ENCODE measurements at regions of chr2 and their contacts with region 1.

Region 1: GRCh38 chr2:55617175-55618024 is at the start of gene PPP4R3B:
- DNase-seq: peak; percentile 99 to 100 (median 100)
- H3K4me3 ChIP-seq: peak within 1 kb of the TSS; percentile 97 to 98
- H3K4me3 Mint-ChIP-seq: no peak within 1 kb of the TSS
- H3K27ac ChIP-seq: peak within 1 kb of the TSS; percentile 100
- H3K27ac Mint-ChIP-seq: no peak within 1 kb of the TSS
- H3K4me1 ChIP-seq: peaks cover 64% of the 10 kb centered on the region
- H3K4me1 Mint-ChIP-seq: peaks cover 23 to 44% (median 40%) of the 10 kb centered on the region in 4 donors
- H3K27me3 ChIP-seq: no peaks in the 10 kb centered on the region
- H3K27me3 Mint-ChIP-seq: no peaks in the 10 kb centered on the region
- total RNA-seq, gene PPP4R3B: 111 to 114 TPM

Region 2: GRCh38 chr2:54570925-54571694 is 1046.3 kb before region 1 on chr2:
- CTCF ChIA-PET with region 1: no interaction called
- POLR2A ChIA-PET with region 1: no interaction called
- intact Hi-C with region 1: loop called (anchors 2 kb)
- DNase-seq: peak; percentile 63 to 87 (median 72)
- H3K4me3 ChIP-seq: peak overlapping the region in 1 of 2 donors; percentile 11
- H3K4me3 Mint-ChIP-seq: peak overlapping the region; percentile 43 to 95 (median 80)
- H3K27ac ChIP-seq: peak overlapping the region; percentile 94
- H3K27ac Mint-ChIP-seq: peak overlapping the region; percentile 93 to 99 (median 99)
- H3K4me1 ChIP-seq: peaks cover 96% of the 10 kb centered on the region
- H3K4me1 Mint-ChIP-seq: peaks cover 64 to 99% (median 84%) of the 10 kb centered on the region in 4 donors
- H3K27me3 ChIP-seq: no peaks in the 10 kb centered on the region
- H3K27me3 Mint-ChIP-seq: no peaks in the 10 kb centered on the region

Region 3: DNA sequence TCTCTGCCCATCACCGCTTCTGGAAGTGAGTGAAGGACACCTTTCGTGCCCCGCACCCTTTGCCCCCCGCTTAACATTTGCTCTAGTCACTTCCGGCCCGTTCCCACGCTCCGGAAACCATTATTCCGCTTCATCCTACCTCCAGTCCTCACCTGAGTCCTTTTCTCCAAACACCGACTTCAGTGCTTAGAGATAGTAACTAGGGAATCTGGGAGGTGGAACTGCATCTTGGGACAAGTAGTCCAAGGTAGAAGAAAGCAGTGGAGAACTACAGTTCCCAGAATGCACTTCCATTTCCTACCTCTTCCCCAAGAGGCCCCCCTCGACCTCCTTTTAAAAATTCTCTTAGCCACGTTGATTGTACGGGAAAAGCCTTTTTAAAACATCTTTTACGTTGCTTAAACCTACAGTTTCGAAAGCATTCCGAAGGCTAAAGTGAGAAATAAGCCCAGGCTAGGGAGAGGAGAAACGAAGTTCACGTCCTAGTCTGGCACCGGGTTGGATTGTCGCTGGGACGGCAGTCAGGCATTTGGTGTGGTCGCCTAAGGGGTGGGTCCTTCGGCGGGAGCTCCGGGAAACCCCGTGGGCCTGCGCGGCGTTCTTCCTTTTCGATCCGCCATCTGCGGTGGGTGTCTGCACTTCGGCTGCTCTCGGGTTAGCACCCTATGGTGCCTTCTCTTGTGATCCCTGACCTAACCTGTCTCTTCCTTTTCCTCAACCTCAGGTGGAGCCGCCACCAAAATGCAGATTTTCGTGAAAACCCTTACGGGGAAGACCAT is 385.1 kb before region 1 on chr2 and contains the starts of genes CLHC1 and RPS27A:
- CTCF ChIA-PET with region 1: no interaction called
- POLR2A ChIA-PET with region 1: interaction called, 13 read pairs
- intact Hi-C with region 1: loop called (anchors 1 kb)
- DNase-seq: peak; percentile 92 to 96 (median 94)
- H3K4me3 ChIP-seq: peak within 1 kb of the TSS; percentile 82 to 98
- H3K4me3 Mint-ChIP-seq: peak within 1 kb of the TSS; percentile 92 to 100 (median 100)
- H3K27ac ChIP-seq: peak within 1 kb of the TSS; percentile 97
- H3K27ac Mint-ChIP-seq: peak within 1 kb of the TSS; percentile 94 to 100 (median 98)
- H3K4me1 ChIP-seq: peaks cover 52% of the 10 kb centered on the region
- H3K4me1 Mint-ChIP-seq: peaks cover 46 to 75% (median 62%) of the 10 kb centered on the region in 4 donors
- H3K27me3 ChIP-seq: no peaks in the 10 kb centered on the region
- H3K27me3 Mint-ChIP-seq: no peaks in the 10 kb centered on the region
- total RNA-seq, gene CLHC1: 12.4 to 14.2 TPM
- total RNA-seq, gene RPS27A: 2,280 to 2,392 TPM

Region 4: DNA sequence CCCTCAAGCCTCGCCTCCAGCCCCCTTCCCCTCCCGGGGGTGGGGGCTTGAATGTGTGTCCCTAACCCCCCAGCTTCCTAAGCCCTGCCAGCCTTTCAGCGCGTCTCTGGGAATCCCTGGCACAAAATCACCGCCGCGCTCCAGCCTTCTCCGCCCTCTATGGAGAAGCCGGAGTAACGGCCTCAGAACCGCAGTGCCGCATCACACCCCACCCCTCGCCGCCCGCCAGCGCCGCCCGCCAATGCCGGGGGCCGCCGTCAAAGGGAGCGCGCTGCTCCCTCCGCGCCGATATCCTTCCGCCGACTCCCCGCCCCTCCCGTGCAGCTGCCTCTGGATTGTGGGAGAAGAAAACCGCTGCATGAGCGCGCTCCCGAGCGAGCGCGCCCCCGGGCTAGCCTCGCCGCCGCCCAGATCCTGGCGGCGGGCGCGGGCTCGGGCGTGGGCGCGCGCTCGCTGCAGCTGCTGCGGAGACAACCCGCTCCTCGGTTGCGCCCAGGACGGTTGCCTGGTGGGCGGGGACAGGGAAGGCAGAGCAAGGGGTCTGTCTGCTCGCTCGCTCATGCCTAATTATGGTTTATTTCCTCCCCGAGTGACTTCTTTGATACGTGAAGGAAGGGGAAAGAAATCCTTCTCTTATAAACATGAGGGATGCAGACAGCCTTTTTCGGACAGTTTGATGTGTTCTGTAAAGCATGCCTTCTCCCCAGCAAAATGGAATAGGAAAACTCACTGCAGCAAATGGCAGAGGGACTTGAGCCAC is 197.5 kb before region 1 on chr2 and contains the start of gene CCDC88A:
- CTCF ChIA-PET with region 1: interaction called, 3 read pairs
- POLR2A ChIA-PET with region 1: interaction called, 9 read pairs
- intact Hi-C with region 1: loop called (anchors 1 kb)
- DNase-seq: peak; percentile 86 to 88 (median 86)
- H3K4me3 ChIP-seq: peak within 1 kb of the TSS; percentile 85 to 94
- H3K4me3 Mint-ChIP-seq: peak within 1 kb of the TSS; percentile 77 to 96 (median 94)
- H3K27ac ChIP-seq: peak within 1 kb of the TSS; percentile 57
- H3K27ac Mint-ChIP-seq: peak within 1 kb of the TSS; percentile 83 to 95 (median 91)
- H3K4me1 ChIP-seq: peaks cover 21% of the 10 kb centered on the region
- H3K4me1 Mint-ChIP-seq: peaks cover 20 to 41% (median 30%) of the 10 kb centered on the region in 4 donors
- H3K27me3 ChIP-seq: no peaks in the 10 kb centered on the region
- H3K27me3 Mint-ChIP-seq: peaks cover 1 to 2% of the 10 kb centered on the region in 2 donors
- total RNA-seq, gene CCDC88A: 18.7 to 19.1 TPM

Region 5: DNA sequence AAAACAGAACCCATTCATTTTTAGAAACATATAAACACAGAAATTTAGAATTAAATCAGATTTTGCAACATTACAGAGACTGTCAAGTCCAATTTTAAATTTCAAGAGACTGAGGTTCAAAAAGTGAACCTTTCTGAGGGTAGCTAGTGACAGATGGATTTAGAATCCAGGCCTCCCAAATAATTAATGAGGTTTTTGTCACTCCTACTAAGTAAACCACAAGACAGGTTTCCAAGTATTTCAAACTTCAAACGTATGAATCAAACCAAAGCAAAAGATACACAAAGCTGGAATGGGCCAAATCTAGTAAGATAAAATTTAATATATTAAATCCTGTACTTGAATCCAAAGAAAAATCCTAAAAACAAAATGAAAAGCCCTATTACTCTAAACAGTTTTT is 25.3 kb before region 1 on chr2:
- CTCF ChIA-PET with region 1: no interaction called
- POLR2A ChIA-PET with region 1: interaction called, 10 read pairs
- intact Hi-C with region 1: no loop called
- DNase-seq: no peak
- H3K4me3 ChIP-seq: no peak overlapping the region
- H3K4me3 Mint-ChIP-seq: peak overlapping the region in 1 of 8 donors; percentile 25
- H3K27ac ChIP-seq: no peak overlapping the region
- H3K27ac Mint-ChIP-seq: peak overlapping the region in 3 of 7 donors; percentile 30 to 68 (median 65)
- H3K4me1 ChIP-seq: peaks cover 43% of the 10 kb centered on the region
- H3K4me1 Mint-ChIP-seq: peaks cover 22 to 38% (median 30%) of the 10 kb centered on the region in 4 donors
- H3K27me3 ChIP-seq: no peaks in the 10 kb centered on the region
- H3K27me3 Mint-ChIP-seq: no peaks in the 10 kb centered on the region

Region 6: GRCh38 chr2:55693181-55694134 is 76.1 kb after region 1 on chr2 and contains the start of gene PNPT1:
- CTCF ChIA-PET with region 1: no interaction called
- POLR2A ChIA-PET with region 1: interaction called, 5 read pairs
- intact Hi-C with region 1: loop called (anchors 1 kb)
- DNase-seq: peak; percentile 89 to 91 (median 89)
- H3K4me3 ChIP-seq: peak within 1 kb of the TSS; percentile 78 to 94
- H3K4me3 Mint-ChIP-seq: peak within 1 kb of the TSS; percentile 96 to 98 (median 98)
- H3K27ac ChIP-seq: peak within 1 kb of the TSS; percentile 74
- H3K27ac Mint-ChIP-seq: peak within 1 kb of the TSS; percentile 90 to 97 (median 93)
- H3K4me1 ChIP-seq: peaks cover 16% of the 10 kb centered on the region
- H3K4me1 Mint-ChIP-seq: peaks cover 29 to 44% (median 32%) of the 10 kb centered on the region in 4 donors
- H3K27me3 ChIP-seq: no peaks in the 10 kb centered on the region
- H3K27me3 Mint-ChIP-seq: peaks cover 0 to under 1% of the 10 kb centered on the region in 2 donors
- total RNA-seq, gene PNPT1: 21.9 to 26.5 TPM

Region 7: DNA sequence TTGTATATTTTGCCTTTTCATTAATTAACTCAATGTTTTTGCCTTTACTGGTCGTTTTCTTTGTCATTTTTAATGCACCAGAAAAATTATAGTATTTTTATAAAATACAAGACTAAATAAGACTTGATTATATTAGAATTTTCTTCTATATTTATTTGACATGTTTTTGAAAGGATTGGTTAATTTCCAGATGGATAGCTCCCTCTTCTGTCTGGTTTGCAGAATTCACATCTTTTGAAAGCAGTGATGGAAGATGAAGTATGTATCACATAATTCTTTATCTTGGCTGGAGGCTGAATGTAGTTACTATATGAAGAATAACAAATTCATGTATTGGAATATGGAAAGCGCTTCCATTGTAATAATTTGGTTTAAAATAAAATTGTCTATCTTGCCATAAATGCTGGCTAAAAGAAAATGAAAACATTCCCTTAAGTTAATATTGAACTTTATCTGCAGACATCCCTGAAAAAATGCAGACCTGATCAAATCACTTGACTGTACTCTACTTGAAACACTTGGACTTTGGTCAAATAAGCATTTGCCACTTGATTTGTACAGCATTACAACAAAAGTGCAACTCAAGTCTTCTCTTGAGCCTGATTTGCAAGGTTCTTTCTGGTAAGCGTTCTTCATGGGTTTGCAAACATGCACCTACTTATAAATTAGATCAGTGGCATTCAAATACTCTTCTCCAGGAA is 392.5 kb after region 1 on chr2:
- CTCF ChIA-PET with region 1: no interaction called
- POLR2A ChIA-PET with region 1: no interaction called
- intact Hi-C with region 1: no loop called
- DNase-seq: no peak
- H3K4me3 ChIP-seq: no peak overlapping the region
- H3K4me3 Mint-ChIP-seq: no peak overlapping the region
- H3K27ac ChIP-seq: no peak overlapping the region
- H3K27ac Mint-ChIP-seq: no peak overlapping the region
- H3K4me1 ChIP-seq: no peaks in the 10 kb centered on the region
- H3K4me1 Mint-ChIP-seq: no peaks in the 10 kb centered on the region
- H3K27me3 ChIP-seq: no peaks in the 10 kb centered on the region
- H3K27me3 Mint-ChIP-seq: peaks cover 0 to 1% of the 10 kb centered on the region in 2 donors